ENCODE measurements at regions of chr1 and their contacts with region 1.

Region 1: GRCh38 chr1:41739061-41739955 is 179.4 kb downstream of the HIVEP3 start:
- DNase-seq: peak; percentile 74
- H3K4me3 Mint-ChIP-seq: peak overlapping the region; percentile 66
- H3K27ac Mint-ChIP-seq: peak overlapping the region; percentile 98
- H3K4me1 Mint-ChIP-seq: peaks cover 93% of the 10 kb centered on the region
- H3K27me3 Mint-ChIP-seq: peaks cover 2% of the 10 kb centered on the region

Region 2: GRCh38 chr1:41662061-41662764 is 77.1 kb before region 1 on chr1:
- intact Hi-C with region 1: loop called (anchors 1 kb)
- DNase-seq: peak; percentile 73
- H3K4me3 Mint-ChIP-seq: peak overlapping the region; percentile 70
- H3K27ac Mint-ChIP-seq: peak overlapping the region; percentile 65
- H3K4me1 Mint-ChIP-seq: peaks cover 83% of the 10 kb centered on the region
- H3K27me3 Mint-ChIP-seq: no peaks in the 10 kb centered on the region

Region 3: DNA sequence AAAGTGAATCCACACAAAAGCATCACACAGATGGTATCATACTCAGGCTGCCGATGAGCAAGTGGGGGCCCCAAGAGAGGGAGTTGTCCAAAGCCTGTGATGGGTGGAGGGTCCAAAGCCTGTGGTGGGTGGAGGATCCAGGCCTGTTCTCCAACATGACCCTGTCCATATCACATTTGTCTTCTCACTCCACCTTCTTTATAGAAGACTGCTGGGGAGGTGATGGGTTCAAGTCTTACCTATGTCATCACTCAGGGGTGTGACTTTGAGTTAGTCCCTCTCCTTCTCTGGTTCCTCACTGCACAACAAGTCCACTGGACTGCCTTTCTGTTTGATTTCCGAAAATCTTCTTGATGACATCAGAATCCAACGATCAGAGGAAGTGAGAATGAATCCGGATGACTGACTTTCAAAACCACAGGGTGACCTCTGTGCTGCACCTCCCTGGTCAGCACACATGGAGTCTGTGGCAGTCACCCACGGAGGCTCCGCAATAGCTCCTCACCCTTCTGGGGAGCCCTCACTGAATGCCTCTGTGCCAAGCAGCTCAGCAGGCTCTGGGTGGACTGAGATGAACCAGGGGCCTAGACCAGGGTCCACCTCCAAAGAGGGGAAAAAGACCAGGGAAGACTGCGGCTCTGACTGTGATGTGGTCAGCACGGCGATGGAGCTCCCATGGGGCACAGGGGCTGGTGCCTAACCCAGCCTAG is 12.7 kb after region 1 on chr1:
- intact Hi-C with region 1: loop called (anchors 1 kb)
- DNase-seq: no peak
- H3K4me3 Mint-ChIP-seq: peak overlapping the region; percentile 48
- H3K27ac Mint-ChIP-seq: peak overlapping the region; percentile 81
- H3K4me1 Mint-ChIP-seq: peaks cover 90% of the 10 kb centered on the region
- H3K27me3 Mint-ChIP-seq: no peaks in the 10 kb centered on the region

Region 4: GRCh38 chr1:41791667-41792484 is 52.6 kb after region 1 on chr1:
- intact Hi-C with region 1: loop called (anchors 1 kb)
- DNase-seq: peak; percentile 11
- H3K4me3 Mint-ChIP-seq: peak overlapping the region; percentile 32
- H3K27ac Mint-ChIP-seq: peak overlapping the region; percentile 89
- H3K4me1 Mint-ChIP-seq: peaks cover 74% of the 10 kb centered on the region
- H3K27me3 Mint-ChIP-seq: no peaks in the 10 kb centered on the region